GM12878 (cell line): ENCODE measurements at regions of chr4 and their contacts with region 1.

Region 1: DNA sequence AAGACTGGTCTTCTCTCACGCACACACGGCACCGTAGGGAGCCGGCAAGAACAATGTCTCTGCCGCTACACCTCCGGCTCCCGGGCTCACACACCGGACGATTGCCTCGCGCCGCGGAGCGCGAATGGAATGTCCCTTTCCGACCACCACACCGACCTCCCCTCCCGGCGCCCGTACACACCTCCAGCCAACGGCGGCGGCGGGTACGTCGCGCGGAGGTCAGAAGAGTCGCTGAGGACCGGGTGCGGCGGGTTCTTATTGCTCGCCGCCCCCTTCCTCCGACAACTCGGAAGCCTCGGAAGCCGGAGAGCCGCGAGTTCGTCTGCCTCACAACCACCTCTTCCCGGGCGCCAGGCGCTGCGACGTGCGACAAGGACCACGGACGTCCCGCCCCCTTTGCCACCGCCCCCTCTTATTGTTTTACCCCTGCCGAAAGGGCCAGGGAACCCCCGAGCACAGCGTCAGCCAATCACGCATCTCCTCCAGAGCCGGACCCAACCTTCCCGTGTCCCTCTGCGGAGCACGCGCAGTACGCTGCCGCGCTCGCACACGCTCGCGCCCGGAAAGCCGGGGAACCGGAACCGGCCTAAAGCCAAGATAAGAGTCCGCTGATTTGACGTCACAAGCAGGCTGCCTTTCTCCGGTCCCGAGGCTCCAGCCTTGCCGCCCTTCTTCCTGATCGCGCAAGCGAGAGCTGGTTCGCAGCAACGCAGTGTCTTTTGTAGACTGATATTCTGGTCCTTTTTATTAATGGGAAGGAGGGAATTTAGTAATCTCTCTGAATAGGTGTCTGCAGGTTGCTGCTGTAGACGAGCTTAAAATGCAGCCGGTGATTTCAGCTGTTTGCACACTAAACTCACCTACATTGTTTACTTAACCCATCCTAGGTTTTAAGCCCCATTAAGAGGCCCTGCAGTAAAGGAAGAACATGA is at the start of gene G3BP2:
- DNase-seq: peak; percentile 98
- ATAC-seq: peak; percentile 93
- H3K4me3 ChIP-seq: peak within 1 kb of the TSS; percentile 77
- H3K27ac ChIP-seq: peak within 1 kb of the TSS; percentile 92
- H3K4me1 ChIP-seq: peaks cover 5% of the 10 kb centered on the region; the same call in 1 of the 2 replicates
- H3K27me3 ChIP-seq: no peaks in the 10 kb centered on the region
- CTCF ChIP-seq: no peak
- EP300 ChIP-seq: peak in 1 of 2 experiments; percentile 9; a peak in 1 of 4 replicates
- POLR2A ChIP-seq: peak; percentile 98
- RAD21 ChIP-seq: no peak
- polyA plus RNA-seq, gene G3BP2: 22.2 to 27.9 TPM

Region 2: GRCh38 chr4:75344915-75345314 is 328.4 kb before region 1 on chr4:
- CTCF ChIA-PET with region 1: no interaction called
- POLR2A ChIA-PET with region 1: no interaction called
- RAD21 ChIA-PET with region 1: no interaction called
- SMC1A ChIA-PET with region 1: no interaction called
- in situ Hi-C with region 1: no loop called
- intact Hi-C with region 1: no loop called
- DNase-seq: no peak
- ATAC-seq: no peak
- H3K4me3 ChIP-seq: no peak overlapping the region
- H3K27ac ChIP-seq: no peak overlapping the region
- H3K4me1 ChIP-seq: no peaks in the 10 kb centered on the region
- H3K27me3 ChIP-seq: no peaks in the 10 kb centered on the region
- CTCF ChIP-seq: no peak
- EP300 ChIP-seq: no peak
- POLR2A ChIP-seq: no peak
- RAD21 ChIP-seq: no peak

Region 3: GRCh38 chr4:75653845-75654503 is 19.3 kb before region 1 on chr4:
- CTCF ChIA-PET with region 1: interaction called, 28 read pairs
- POLR2A ChIA-PET with region 1: interaction called, 6 read pairs
- RAD21 ChIA-PET with region 1: no interaction called
- SMC1A ChIA-PET with region 1: interaction called, 13 read pairs
- in situ Hi-C with region 1: no loop called
- intact Hi-C with region 1: no loop called
- DNase-seq: no peak
- ATAC-seq: peak; percentile 37; the same call in 1 of the 3 replicates
- H3K4me3 ChIP-seq: no peak overlapping the region
- H3K27ac ChIP-seq: no peak overlapping the region
- H3K4me1 ChIP-seq: peaks cover 7% of the 10 kb centered on the region; the same call in 1 of the 2 replicates
- H3K27me3 ChIP-seq: no peaks in the 10 kb centered on the region
- CTCF ChIP-seq: peak; percentile 17 to 41 (median 24); a peak in 2 of 6 replicates
- EP300 ChIP-seq: no peak
- POLR2A ChIP-seq: no peak
- RAD21 ChIP-seq: no peak

Region 4: GRCh38 chr4:75698162-75698962 is 25.1 kb after region 1 on chr4:
- CTCF ChIA-PET with region 1: interaction called, 9 read pairs
- POLR2A ChIA-PET with region 1: interaction called, 8 read pairs
- RAD21 ChIA-PET with region 1: interaction called, 3 read pairs
- SMC1A ChIA-PET with region 1: interaction called, 11 read pairs
- in situ Hi-C with region 1: no loop called
- intact Hi-C with region 1: loop called (anchors 2 kb)
- DNase-seq: peak; percentile 66
- ATAC-seq: peak; percentile 97
- H3K4me3 ChIP-seq: peak overlapping the region; percentile 54; the same call in 1 of the 2 replicates
- H3K27ac ChIP-seq: peak overlapping the region; percentile 90
- H3K4me1 ChIP-seq: peaks cover 21% of the 10 kb centered on the region
- H3K27me3 ChIP-seq: no peaks in the 10 kb centered on the region
- CTCF ChIP-seq: no peak
- EP300 ChIP-seq: no peak
- POLR2A ChIP-seq: no peak
- RAD21 ChIP-seq: no peak